Endothelial cell of umbilical vein (primary cell): ENCODE measurements at regions of chr1 and their contacts with region 1.

Region 1: GRCh38 chr1:155193275-155193990 is 14.3 kb downstream of the THBS3 start:
- DNase-seq: peak; percentile 91
- H3K4me3 ChIP-seq: peak overlapping the region; percentile 30 to 37 (median 31)
- H3K27ac ChIP-seq: peak overlapping the region; percentile 1
- H3K4me1 ChIP-seq: peaks cover 13% of the 10 kb centered on the region
- H3K27me3 ChIP-seq: no peaks in the 10 kb centered on the region
- CTCF ChIP-seq: peak; percentile 98 to 99
- POLR2A ChIP-seq: peak; percentile 30

Region 2: DNA sequence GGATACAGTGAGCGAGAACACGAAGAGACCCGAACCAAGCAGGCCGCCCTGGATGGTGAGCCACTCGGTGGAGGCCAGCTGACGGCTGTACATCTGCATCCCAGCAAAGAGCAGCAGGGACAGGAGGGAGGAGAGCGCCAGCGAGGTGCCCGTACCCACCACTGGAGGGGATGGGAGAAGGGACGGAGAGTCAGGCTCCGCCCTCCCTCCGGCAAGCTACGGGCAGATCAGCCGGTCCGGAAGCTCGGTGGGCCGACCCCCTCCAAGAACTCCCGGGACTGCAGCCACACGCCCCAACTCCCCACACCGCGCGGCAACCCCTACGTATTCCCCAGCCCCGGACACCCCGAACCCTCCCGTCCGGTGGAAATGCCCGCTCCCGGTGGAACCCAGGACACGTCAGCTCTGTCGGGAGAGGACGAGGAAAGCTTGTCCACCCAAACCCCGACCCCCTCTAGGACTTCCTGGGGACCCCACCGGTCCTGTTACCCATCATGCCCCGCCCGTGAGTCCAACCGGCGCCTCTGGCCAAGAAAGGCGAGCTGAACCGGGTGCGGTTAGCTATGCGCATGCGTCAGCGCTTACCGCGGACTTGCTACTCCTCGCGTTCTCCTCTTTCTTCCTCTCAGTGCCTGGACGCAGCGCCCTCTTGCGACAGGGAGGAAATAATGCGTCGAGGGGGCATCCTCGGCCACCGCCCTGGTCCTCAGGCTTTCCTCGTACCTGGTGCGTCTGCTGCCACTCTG is 20.5 kb before region 1 on chr1 and contains the start of gene KRTCAP2:
- CTCF ChIA-PET with region 1: interaction called, 88 read pairs
- POLR2A ChIA-PET with region 1: interaction called, 8 read pairs
- dilution Hi-C with region 1: no loop called
- intact Hi-C with region 1: loop called (anchors 2 kb)
- DNase-seq: peak; percentile 93
- H3K4me3 ChIP-seq: peak within 1 kb of the TSS; percentile 52 to 91 (median 63)
- H3K27ac ChIP-seq: peak within 1 kb of the TSS; percentile 76
- H3K4me1 ChIP-seq: peaks cover 11% of the 10 kb centered on the region
- H3K27me3 ChIP-seq: no peaks in the 10 kb centered on the region
- CTCF ChIP-seq: peak; percentile 95 to 98
- POLR2A ChIP-seq: peak; percentile 97
- total RNA-seq, gene KRTCAP2: 170 and 207 TPM in 2 replicates

Region 3: DNA sequence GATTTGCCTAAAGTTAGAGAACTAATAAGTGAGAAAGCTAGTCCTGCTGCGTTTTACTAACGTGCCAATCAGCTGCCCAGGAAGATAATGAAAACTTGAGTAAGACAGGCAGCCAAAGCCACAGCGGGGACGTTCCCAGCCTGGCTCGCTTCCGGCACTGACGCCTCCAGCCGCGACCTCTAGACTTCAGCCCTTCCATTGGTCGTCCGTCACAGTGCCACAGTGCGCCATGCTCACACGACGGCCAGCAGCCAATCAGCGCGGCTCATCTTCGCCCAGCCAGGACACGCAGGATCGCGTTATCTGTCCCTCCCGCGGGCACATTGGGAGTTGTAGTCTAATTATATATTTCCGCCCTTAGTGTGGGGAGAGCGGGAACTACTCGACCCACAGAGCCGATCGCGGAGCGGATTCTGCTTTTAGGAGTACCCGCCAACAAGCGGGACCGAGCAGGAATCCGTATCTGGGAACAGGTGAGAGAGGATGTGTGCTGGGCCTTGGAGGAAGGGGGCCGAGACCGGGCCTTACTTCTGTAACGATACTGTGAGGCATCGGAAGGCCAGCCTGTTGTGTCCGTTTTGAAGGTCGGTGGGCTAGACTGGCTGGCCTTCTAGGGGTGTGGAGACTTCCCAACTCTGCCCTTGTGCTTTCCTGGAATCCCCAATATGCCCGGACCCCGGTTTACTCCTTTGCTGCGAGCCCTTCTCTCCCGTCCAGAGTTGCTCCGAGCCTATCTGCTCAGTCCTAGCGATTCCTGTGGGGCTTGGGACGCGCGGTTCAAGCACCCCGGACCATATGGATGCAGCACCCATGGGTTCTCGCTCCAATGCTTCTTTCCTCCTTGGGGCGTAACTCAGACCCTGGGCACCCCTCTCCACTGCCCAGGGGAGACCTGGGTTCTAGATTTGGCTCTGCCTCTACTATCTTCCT is 115.3 kb after region 1 on chr1 and contains the start of gene FDPS:
- CTCF ChIA-PET with region 1: interaction called, 5 read pairs
- POLR2A ChIA-PET with region 1: no interaction called
- dilution Hi-C with region 1: no loop called
- intact Hi-C with region 1: loop called (anchors 5 kb)
- DNase-seq: peak; percentile 99
- H3K4me3 ChIP-seq: peak within 1 kb of the TSS; percentile 47 to 86 (median 84)
- H3K27ac ChIP-seq: peak within 1 kb of the TSS; percentile 88
- H3K4me1 ChIP-seq: peaks cover 24% of the 10 kb centered on the region
- H3K27me3 ChIP-seq: no peaks in the 10 kb centered on the region
- CTCF ChIP-seq: no peak
- POLR2A ChIP-seq: peak; percentile 87
- total RNA-seq, gene FDPS: 630 and 670 TPM in 2 replicates